Natural killer cell (primary cell): ENCODE measurements at regions of chr3 and their contacts with region 1.

Region 1: GRCh38 chr3:58116161-58116955 is 94.4 kb downstream of the DNASE1L3 start:
- DNase-seq: peak; percentile 39 to 86
- ATAC-seq: peak; percentile 90 to 94 (median 90)
- H3K4me3 ChIP-seq: no peak overlapping the region
- H3K4me3 Mint-ChIP-seq: peak overlapping the region; percentile 2
- H3K27ac ChIP-seq: peak overlapping the region; percentile 60
- H3K27ac Mint-ChIP-seq: peak overlapping the region in 1 of 2 donors; percentile 81
- H3K4me1 ChIP-seq: peaks cover 30% of the 10 kb centered on the region
- H3K4me1 Mint-ChIP-seq: peaks cover 15 to 20% of the 10 kb centered on the region in 2 donors
- H3K27me3 ChIP-seq: no peaks in the 10 kb centered on the region
- H3K27me3 Mint-ChIP-seq: no peaks in the 10 kb centered on the region
- CTCF ChIP-seq: no peak

Region 2: DNA sequence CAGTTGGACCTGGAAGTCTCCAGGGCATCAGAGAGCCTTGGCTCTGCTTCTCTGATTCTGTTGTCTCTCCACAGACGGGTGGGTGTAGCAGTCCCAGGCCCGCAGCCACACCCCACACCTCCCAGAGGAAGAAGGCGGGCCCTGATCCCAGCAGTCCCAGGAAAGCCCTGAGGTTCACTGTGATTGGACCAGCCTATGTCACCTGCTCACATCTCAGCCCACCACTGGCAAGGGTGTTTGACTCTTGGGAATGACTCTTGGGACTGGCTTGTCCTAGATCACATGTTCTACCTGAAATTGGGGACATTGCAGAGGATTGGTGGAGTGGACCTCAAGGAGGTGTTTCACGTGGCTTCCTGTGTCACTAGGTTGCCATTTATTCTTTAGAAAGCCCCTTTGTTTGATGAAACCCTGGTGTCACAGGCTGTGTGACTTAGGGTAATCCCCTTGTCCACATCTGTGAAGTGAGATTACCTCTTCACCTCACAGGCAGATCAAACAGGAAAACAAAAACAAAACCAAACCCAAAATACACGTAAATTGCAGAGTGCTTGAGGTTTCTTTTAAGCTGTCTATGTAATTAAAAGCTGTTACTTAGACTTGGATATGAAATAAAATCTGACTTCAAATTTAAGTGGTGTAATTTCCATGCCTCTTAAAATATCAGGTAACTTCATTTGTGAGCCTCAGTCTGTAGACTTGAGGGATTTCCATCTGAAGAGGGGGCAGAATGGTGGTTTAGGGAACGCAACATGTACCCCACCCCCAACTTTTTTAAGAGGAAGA is 81.4 kb before region 1 on chr3:
- intact Hi-C with region 1: loop called (anchors 1 kb)
- DNase-seq: peak; percentile 17 to 86
- ATAC-seq: peak; percentile 90 to 95 (median 91)
- H3K4me3 ChIP-seq: no peak overlapping the region
- H3K4me3 Mint-ChIP-seq: peak overlapping the region; percentile 66
- H3K27ac ChIP-seq: peak overlapping the region; percentile 79
- H3K27ac Mint-ChIP-seq: peak overlapping the region; percentile 86 to 87
- H3K4me1 ChIP-seq: peaks cover 40% of the 10 kb centered on the region
- H3K4me1 Mint-ChIP-seq: peaks cover 25 to 27% of the 10 kb centered on the region in 2 donors
- H3K27me3 ChIP-seq: no peaks in the 10 kb centered on the region
- H3K27me3 Mint-ChIP-seq: no peaks in the 10 kb centered on the region
- CTCF ChIP-seq: no peak